ENCODE measurements at regions of chr11 and their contacts with region 1.

Region 1: GRCh38 chr11:85694386-85694980 is 8.5 kb upstream of the CCDC89 start:
- DNase-seq: peak in 7 of 9 donors; percentile 36 to 63 (median 55)
- ATAC-seq: peak; percentile 70
- H3K4me3 ChIP-seq: no peak overlapping the region
- H3K4me3 Mint-ChIP-seq: no peak overlapping the region
- H3K27ac ChIP-seq: no peak overlapping the region
- H3K27ac Mint-ChIP-seq: peak overlapping the region in 1 of 9 donors; percentile 12
- H3K4me1 ChIP-seq: peaks cover 2 to 7% of the 10 kb centered on the region in 2 donors
- H3K4me1 Mint-ChIP-seq: peaks cover 2 to 52% (median 8%) of the 10 kb centered on the region in 7 donors
- H3K27me3 ChIP-seq: no peaks in the 10 kb centered on the region
- H3K27me3 Mint-ChIP-seq: peaks cover 0 to 3% (median 0%) of the 10 kb centered on the region in 5 donors

Region 2: GRCh38 chr11:85718991-85719807 is 24.7 kb after region 1 on chr11:
- CTCF ChIA-PET with region 1: no interaction called
- POLR2A ChIA-PET with region 1: no interaction called
- intact Hi-C with region 1: no loop called
- DNase-seq: no peak
- ATAC-seq: no peak
- H3K4me3 ChIP-seq: no peak overlapping the region
- H3K4me3 Mint-ChIP-seq: no peak overlapping the region
- H3K27ac ChIP-seq: no peak overlapping the region
- H3K27ac Mint-ChIP-seq: peak overlapping the region in 1 of 9 donors; percentile 84
- H3K4me1 ChIP-seq: no peaks in the 10 kb centered on the region
- H3K4me1 Mint-ChIP-seq: peaks cover 0 to 4% (median 0%) of the 10 kb centered on the region in 7 donors
- H3K27me3 ChIP-seq: no peaks in the 10 kb centered on the region
- H3K27me3 Mint-ChIP-seq: peaks cover 0 to 2% (median 0%) of the 10 kb centered on the region in 5 donors

Region 3: GRCh38 chr11:85779956-85780640 is 85.6 kb after region 1 on chr11:
- CTCF ChIA-PET with region 1: no interaction called
- POLR2A ChIA-PET with region 1: no interaction called
- intact Hi-C with region 1: loop called in 1 of 2 experiments (anchors 1 kb)
- DNase-seq: no peak
- ATAC-seq: no peak
- H3K4me3 ChIP-seq: no peak overlapping the region
- H3K4me3 Mint-ChIP-seq: no peak overlapping the region
- H3K27ac ChIP-seq: no peak overlapping the region
- H3K27ac Mint-ChIP-seq: peak overlapping the region in 4 of 9 donors; percentile 1 to 43 (median 16)
- H3K4me1 ChIP-seq: peaks cover 11% of the 10 kb centered on the region in 2 donors
- H3K4me1 Mint-ChIP-seq: peaks cover 20 to 75% (median 48%) of the 10 kb centered on the region in 7 donors
- H3K27me3 ChIP-seq: no peaks in the 10 kb centered on the region
- H3K27me3 Mint-ChIP-seq: no peaks in the 10 kb centered on the region

Region 4: GRCh38 chr11:85826116-85826855 is 131.8 kb after region 1 on chr11:
- CTCF ChIA-PET with region 1: interaction called, 12 read pairs
- POLR2A ChIA-PET with region 1: interaction called, 8 read pairs
- intact Hi-C with region 1: loop called (anchors 1 kb)
- DNase-seq: peak in 3 of 9 donors; percentile 24 to 39 (median 28)
- ATAC-seq: no peak
- H3K4me3 ChIP-seq: no peak overlapping the region
- H3K4me3 Mint-ChIP-seq: peak overlapping the region in 9 of 10 donors; percentile 11 to 65 (median 40)
- H3K27ac ChIP-seq: no peak overlapping the region
- H3K27ac Mint-ChIP-seq: peak overlapping the region; percentile 59 to 100 (median 93)
- H3K4me1 ChIP-seq: peaks cover 55 to 57% of the 10 kb centered on the region in 2 donors
- H3K4me1 Mint-ChIP-seq: peaks cover 28 to 72% (median 64%) of the 10 kb centered on the region in 7 donors
- H3K27me3 ChIP-seq: no peaks in the 10 kb centered on the region
- H3K27me3 Mint-ChIP-seq: no peaks in the 10 kb centered on the region

Region 5: GRCh38 chr11:86193297-86194095 is 499.0 kb after region 1 on chr11:
- CTCF ChIA-PET with region 1: interaction called, 5 read pairs
- POLR2A ChIA-PET with region 1: no interaction called
- intact Hi-C with region 1: loop called in 1 of 2 experiments (anchors 1 kb)
- DNase-seq: peak; percentile 9 to 70 (median 65)
- ATAC-seq: peak; percentile 99
- H3K4me3 ChIP-seq: peak overlapping the region; percentile 36
- H3K4me3 Mint-ChIP-seq: peak overlapping the region; percentile 71 to 94 (median 88)
- H3K27ac ChIP-seq: no peak overlapping the region
- H3K27ac Mint-ChIP-seq: peak overlapping the region; percentile 21 to 91 (median 67)
- H3K4me1 ChIP-seq: peaks cover 5 to 7% of the 10 kb centered on the region in 2 donors
- H3K4me1 Mint-ChIP-seq: peaks cover 13 to 24% (median 15%) of the 10 kb centered on the region in 7 donors
- H3K27me3 ChIP-seq: no peaks in the 10 kb centered on the region
- H3K27me3 Mint-ChIP-seq: peaks cover 0 to 10% (median 3%) of the 10 kb centered on the region in 5 donors